ENCODE measurements at regions of chr4 and their contacts with region 1.

Region 1: DNA sequence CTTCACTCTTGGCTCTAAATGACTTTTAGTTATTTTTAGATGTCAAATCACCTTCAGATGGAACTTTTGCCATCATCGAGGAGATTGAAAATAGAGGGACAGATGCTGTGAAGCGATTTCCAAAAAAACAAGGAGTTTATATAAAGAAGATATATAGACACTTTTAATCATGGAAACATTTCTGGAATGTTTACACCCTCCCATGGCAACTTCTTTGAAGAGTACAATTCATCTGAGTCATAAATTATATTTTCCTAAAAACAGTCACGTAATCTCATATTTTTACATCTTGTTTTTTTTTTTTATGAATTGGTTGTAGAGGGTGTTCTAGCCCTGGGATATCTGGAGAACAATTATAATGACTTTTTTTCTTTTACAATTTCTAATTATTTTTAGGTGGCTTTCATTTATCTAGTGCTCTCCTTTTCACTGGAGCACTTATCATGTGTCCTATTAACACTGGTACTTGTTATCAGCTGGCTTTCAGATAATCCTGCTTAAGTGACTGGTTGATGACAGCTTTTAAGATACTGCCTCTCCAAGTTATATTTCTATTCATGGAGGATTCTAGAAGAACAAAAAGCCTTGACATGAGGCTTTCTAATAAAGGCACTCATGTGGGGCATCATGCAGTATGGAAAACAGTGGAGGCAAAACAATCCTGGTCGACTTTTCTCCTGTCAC is 24.9 kb downstream of the PCDH7 start:
- DNase-seq: no peak
- ATAC-seq: peak; percentile 6
- H3K4me3 ChIP-seq: no peak overlapping the region
- H3K27ac ChIP-seq: peak overlapping the region; percentile 36 to 97
- H3K4me1 ChIP-seq: peaks cover 3 to 7% of the 10 kb centered on the region in 2 donors
- H3K27me3 ChIP-seq: no peaks in the 10 kb centered on the region

Region 2: GRCh38 chr4:31089815-31090214 is 344.7 kb after region 1 on chr4:
- intact Hi-C with region 1: loop called in 1 of 2 experiments (anchors 10 kb)
- DNase-seq: no peak
- ATAC-seq: no peak
- H3K4me3 ChIP-seq: no peak overlapping the region
- H3K27ac ChIP-seq: peak overlapping the region; percentile 82 to 92
- H3K4me1 ChIP-seq: peaks cover 3 to 4% of the 10 kb centered on the region in 2 donors
- H3K27me3 ChIP-seq: no peaks in the 10 kb centered on the region